Posterior vena cava (tissue), 2 donors: ENCODE measurements at regions of chr6 and their contacts with region 1.

Region 1: DNA sequence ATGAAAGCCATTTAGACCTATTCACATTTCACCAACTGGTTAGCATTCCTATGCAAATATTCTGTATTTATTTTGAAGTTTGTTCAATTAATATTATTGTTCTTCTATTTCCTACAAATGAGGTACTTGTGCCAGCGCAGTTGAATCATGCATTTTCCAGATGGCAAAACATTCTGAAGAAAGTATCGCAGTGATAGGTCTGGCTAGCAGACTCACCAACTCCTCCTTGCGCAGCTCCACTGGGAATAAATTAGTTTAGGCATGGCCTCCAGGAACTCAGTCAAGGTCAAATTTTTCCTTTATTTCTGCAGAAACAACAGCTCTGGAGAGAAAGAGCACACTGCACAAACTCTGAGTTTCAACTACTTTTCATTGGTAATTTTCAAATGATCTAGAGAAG is 437.7 kb downstream of the COL12A1 start:
- DNase-seq: no peak

Region 2: GRCh38 chr6:74755778-74756177 is 12.3 kb before region 1 on chr6:
- intact Hi-C with region 1: loop called in 1 of 2 experiments (anchors 2 kb)
- DNase-seq: no peak